ENCODE measurements at regions of chr2 and their contacts with region 1.

Region 1: DNA sequence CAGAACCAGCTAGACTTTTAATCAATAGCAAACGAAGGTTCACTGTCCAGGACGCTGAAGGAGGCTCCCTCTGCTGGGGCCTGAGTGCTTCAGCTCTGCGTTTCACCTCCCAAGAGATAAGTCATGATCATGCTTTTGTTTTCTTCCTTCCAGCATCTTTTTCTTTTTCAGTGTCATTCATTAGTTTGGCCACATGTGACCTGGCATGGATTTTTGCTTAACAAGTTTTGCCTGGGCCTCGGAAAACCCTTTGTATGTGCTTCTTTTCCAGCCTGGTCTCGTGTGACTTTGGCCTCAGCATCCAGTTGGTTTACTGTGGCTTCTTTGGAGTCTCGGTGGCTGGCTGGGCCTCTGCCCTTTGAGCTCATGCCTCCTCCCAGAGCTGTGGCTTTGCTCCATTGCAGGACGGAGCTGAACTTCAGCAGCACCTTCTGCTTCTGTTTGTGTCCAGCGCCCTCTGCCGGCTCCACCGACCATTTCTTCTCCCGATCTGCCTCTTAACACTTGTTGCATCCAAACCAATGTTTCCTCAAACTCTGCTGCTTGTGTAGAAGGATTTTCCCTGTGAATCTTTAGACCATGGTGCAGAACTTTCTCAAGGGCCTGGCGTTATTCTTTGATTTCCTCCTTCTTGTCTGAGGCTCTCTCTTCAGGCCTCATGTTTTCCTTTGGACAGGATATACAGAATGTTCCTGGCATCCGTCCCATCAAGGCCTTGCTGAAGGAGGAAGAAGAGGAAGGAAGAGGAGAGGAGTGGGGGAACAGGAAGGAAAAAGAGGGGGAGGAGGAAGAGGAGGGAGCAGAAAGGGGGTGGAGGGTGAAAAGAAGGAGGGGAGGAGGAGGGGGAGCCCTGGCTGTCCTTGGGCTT is 23.6 kb upstream of the HES6 start:
- DNase-seq: peak; percentile 93 to 96 (median 94)
- H3K4me3 ChIP-seq: no peak overlapping the region
- H3K27ac ChIP-seq: peak overlapping the region in 1 of 2 donors; percentile 8
- H3K4me1 ChIP-seq: peaks cover 0 to 25% (median 14%) of the 10 kb centered on the region in 3 donors
- H3K27me3 ChIP-seq: no peaks in the 10 kb centered on the region
- CTCF ChIP-seq: peak; percentile 87

Region 2: DNA sequence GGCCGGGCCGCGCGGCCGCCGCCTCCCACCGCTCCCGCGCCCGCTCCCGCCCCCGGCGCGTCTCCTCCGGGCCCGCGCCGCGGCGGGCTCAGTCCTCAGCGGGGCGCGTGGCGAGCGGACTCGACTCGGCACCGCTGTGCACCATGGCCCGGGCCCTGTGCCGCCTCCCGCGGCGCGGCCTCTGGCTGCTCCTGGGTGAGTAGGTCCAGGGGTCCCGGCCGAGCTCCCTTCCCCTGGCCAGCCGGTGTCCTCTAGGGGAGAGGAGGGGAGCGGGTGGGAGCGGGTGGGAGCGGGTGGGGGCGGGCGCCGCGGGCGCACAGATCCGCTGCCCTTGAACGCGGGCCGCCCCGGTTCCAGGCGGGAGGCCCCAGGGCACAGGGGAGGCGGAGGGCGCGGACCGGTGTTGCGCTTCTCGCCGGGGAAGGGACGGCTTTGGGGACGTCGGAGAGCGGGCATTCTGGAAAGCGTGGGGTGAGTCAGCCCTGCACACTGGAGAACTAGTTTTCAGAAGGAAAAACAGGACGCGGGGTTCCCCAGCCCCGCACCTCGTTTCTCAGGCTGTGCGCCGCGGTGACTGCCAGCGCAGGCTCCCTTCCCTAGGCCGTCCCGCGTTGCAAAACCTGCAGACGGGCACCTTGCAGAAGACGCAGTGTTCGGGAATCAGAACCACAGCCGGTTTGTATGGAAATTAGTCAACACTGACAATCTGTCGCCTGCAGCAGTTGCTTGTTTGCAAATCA is 403.7 kb before region 1 on chr2 and contains the start of gene RAMP1:
- intact Hi-C with region 1: loop called (anchors 10 kb)
- DNase-seq: peak in 4 of 5 donors; percentile 27 to 77 (median 52)
- H3K4me3 ChIP-seq: peak within 1 kb of the TSS in 2 of 3 donors; percentile 30 to 37
- H3K27ac ChIP-seq: peak within 1 kb of the TSS in 1 of 2 donors; percentile 22
- H3K4me1 ChIP-seq: peaks cover 0 to 2% (median 0%) of the 10 kb centered on the region in 3 donors
- H3K27me3 ChIP-seq: no peaks in the 10 kb centered on the region
- CTCF ChIP-seq: no peak
- total RNA-seq, gene RAMP1: 8.8 TPM

Region 3: GRCh38 chr2:238158527-238159070 is 104.8 kb before region 1 on chr2 and contains the start of gene ERFE:
- intact Hi-C with region 1: no loop called
- DNase-seq: peak in 4 of 5 donors; percentile 68 to 84 (median 76)
- H3K4me3 ChIP-seq: no peak within 1 kb of the TSS
- H3K27ac ChIP-seq: no peak within 1 kb of the TSS
- H3K4me1 ChIP-seq: no peaks in the 10 kb centered on the region
- H3K27me3 ChIP-seq: no peaks in the 10 kb centered on the region
- CTCF ChIP-seq: peak; percentile 15
- total RNA-seq, gene ERFE: 61.4 TPM